ENCODE measurements at regions of chr16 and their contacts with region 1.

Region 1: GRCh38 chr16:4200000-4200780 is 41.7 kb downstream of the SRL start:
- DNase-seq: peak; percentile 53
- ATAC-seq: peak; percentile 55
- H3K4me3 Mint-ChIP-seq: no peak overlapping the region
- H3K27ac Mint-ChIP-seq: no peak overlapping the region
- H3K4me1 Mint-ChIP-seq: peaks cover 3% of the 10 kb centered on the region
- H3K27me3 Mint-ChIP-seq: peaks cover 4% of the 10 kb centered on the region

Region 2: DNA sequence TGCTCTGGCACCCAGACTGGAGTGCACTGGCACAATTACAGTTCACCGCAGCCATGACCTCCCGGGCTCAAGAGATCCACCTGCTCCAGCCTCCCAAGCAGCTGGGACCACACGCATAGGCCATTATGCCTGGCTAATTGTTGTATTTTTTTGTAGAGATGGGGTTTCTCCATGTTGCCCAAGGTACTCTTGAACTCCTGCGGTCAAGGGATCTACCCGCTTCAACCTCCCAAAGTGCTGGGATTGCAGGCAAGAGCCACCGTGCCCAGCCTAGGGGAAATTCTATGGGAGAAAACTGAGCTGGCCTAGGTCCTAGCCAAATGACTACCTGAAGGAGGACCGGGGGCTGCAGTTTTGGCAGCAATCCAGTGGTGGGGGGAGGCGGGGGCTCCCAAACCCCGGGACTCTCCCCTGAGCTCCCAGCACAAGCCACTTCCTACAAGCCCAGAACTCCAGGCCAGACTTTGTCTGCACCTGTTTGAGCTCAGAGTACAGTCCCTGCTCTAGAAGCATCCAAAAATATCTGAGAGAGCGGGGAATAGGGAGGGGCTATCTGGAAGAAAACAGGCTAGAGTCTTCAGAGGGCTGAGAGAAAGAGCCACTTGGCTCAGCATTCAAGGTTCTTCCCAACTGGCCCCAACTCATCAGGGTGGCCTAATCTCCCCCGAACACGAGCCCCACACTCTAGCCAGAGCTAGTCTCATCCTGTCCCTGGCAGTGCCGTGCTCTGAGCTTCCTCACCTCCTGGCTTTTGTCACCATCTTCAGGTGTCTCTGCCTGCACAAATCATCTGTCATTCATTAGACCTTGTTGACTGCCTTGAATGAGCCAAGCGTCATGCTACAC is 32.6 kb after region 1 on chr16:
- CTCF ChIA-PET with region 1: interaction called, 3 read pairs
- POLR2A ChIA-PET with region 1: interaction called, 10 read pairs
- intact Hi-C with region 1: no loop called
- DNase-seq: no peak
- ATAC-seq: no peak
- H3K4me3 Mint-ChIP-seq: no peak overlapping the region
- H3K27ac Mint-ChIP-seq: no peak overlapping the region
- H3K4me1 Mint-ChIP-seq: no peaks in the 10 kb centered on the region
- H3K27me3 Mint-ChIP-seq: peaks cover 2% of the 10 kb centered on the region